ENCODE measurements at regions of chr11 and their contacts with region 1.

Region 1: DNA sequence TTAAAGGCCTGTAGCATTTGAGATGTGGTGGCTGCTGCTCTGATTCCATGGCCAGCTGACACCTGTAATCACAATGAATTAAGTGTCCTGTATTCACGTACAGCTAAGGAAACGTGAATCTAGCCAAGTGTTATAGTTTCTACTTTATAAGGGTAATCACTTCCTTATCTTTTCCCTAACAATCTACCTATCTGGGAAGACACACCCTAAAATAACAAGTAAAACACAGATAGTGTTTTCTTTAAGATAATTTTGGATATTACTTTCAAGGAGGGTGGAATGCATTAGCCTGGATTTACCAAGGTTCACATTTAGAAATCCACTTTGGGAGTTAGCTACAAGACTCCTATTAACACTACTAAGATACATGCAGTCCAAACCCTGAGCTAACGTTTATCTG is 11.5 kb downstream of the CDON start:
- DNase-seq: no peak
- ATAC-seq: no peak
- H3K4me3 ChIP-seq: no peak overlapping the region
- H3K27ac ChIP-seq: no peak overlapping the region
- H3K4me1 ChIP-seq: no peaks in the 10 kb centered on the region; the same call in 2 of the 3 replicates
- CTCF ChIP-seq: no peak
- EP300 ChIP-seq: no peak
- POLR2A ChIP-seq: no peak
- RAD21 ChIP-seq: no peak

Region 2: GRCh38 chr11:126062679-126063506 is 11.8 kb after region 1 on chr11 and contains the start of gene CDON:
- CTCF ChIA-PET with region 1: interaction called, 11 read pairs
- POLR2A ChIA-PET with region 1: no interaction called
- DNase-seq: peak; percentile 90 to 95
- ATAC-seq: peak; percentile 92 to 96
- H3K4me3 ChIP-seq: peak within 1 kb of the TSS; percentile 87
- H3K27ac ChIP-seq: peak within 1 kb of the TSS; percentile 92
- H3K4me1 ChIP-seq: peaks cover 16% of the 10 kb centered on the region
- CTCF ChIP-seq: no peak
- EP300 ChIP-seq: no peak
- POLR2A ChIP-seq: no peak
- RAD21 ChIP-seq: 0 out of 5 replicates have a peak, but pooled peaks of 1 of the 2 experiments have one; percentile 12
- polyA plus RNA-seq, gene CDON: 5.6 and 7.8 TPM in 2 replicates

Region 3: GRCh38 chr11:126132319-126132718 is 81.2 kb after region 1 on chr11:
- CTCF ChIA-PET with region 1: no interaction called
- POLR2A ChIA-PET with region 1: no interaction called
- DNase-seq: peak in 1 of 2 experiments; percentile 49
- ATAC-seq: peak; percentile 86 to 91
- H3K4me3 ChIP-seq: no peak overlapping the region
- H3K27ac ChIP-seq: no peak overlapping the region
- H3K4me1 ChIP-seq: peaks cover 11% of the 10 kb centered on the region
- CTCF ChIP-seq: no peak
- EP300 ChIP-seq: no peak
- POLR2A ChIP-seq: no peak
- RAD21 ChIP-seq: no peak